AG04450 (cell line): ENCODE measurements at regions of chr15 and their contacts with region 1.

Region 1: GRCh38 chr15:67134067-67134838 is 68.9 kb downstream of the SMAD3 start:
- DNase-seq: no peak
- H3K4me3 ChIP-seq: no peak overlapping the region; the same call in 1 of the 2 replicates
- H3K27ac ChIP-seq: peak overlapping the region; percentile 95
- H3K27me3 ChIP-seq: no peaks in the 10 kb centered on the region
- CTCF ChIP-seq: no peak

Region 2: GRCh38 chr15:67146875-67147381 is 12.7 kb after region 1 on chr15:
- CTCF ChIA-PET with region 1: no interaction called
- POLR2A ChIA-PET with region 1: interaction called, 10 read pairs
- DNase-seq: peak; percentile 88
- H3K4me3 ChIP-seq: no peak overlapping the region
- H3K27ac ChIP-seq: peak overlapping the region; percentile 99
- H3K27me3 ChIP-seq: no peaks in the 10 kb centered on the region
- CTCF ChIP-seq: no peak

Region 3: GRCh38 chr15:67178569-67179210 is 44.4 kb after region 1 on chr15:
- CTCF ChIA-PET with region 1: no interaction called
- POLR2A ChIA-PET with region 1: interaction called, 12 read pairs
- DNase-seq: peak; percentile 97
- H3K4me3 ChIP-seq: no peak overlapping the region
- H3K27ac ChIP-seq: peak overlapping the region; percentile 98
- H3K27me3 ChIP-seq: no peaks in the 10 kb centered on the region
- CTCF ChIP-seq: no peak